Right ventricle myocardium superior (tissue), 1 donor: ENCODE measurements at regions of chr3 and their contacts with region 1.

Region 1: DNA sequence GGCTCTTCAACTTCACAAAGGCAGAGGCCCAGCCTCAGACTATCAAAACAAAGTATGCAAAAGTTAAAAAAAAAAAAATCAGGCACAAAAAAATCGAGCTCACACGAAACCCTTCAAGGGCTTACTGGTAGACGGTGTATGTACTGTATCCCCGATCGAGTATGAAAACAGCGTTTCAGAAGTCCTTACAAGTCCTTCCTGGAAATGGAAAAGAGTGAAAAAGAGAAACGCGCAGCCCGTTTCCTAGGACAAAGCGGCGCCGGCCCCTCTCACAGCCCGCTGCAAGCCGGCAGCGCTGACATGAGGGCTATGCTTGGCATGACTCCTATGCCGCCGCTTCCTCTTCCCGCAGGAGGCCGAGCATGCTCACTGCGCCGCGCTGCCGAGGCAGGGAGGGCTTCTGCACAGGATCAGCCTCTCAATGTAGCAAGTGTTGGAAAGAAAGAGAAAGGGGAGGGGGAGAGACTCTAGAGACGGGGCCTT is at the start of gene VGLL4:
- DNase-seq: peak; percentile 96
- ATAC-seq: peak; percentile 90
- total RNA-seq, gene VGLL4: 23.0 TPM

Region 2: GRCh38 chr3:11561341-11561943 is 82.2 kb before region 1 on chr3:
- intact Hi-C with region 1: loop called (anchors 5 kb)
- DNase-seq: peak; percentile 25
- ATAC-seq: no peak

Region 3: DNA sequence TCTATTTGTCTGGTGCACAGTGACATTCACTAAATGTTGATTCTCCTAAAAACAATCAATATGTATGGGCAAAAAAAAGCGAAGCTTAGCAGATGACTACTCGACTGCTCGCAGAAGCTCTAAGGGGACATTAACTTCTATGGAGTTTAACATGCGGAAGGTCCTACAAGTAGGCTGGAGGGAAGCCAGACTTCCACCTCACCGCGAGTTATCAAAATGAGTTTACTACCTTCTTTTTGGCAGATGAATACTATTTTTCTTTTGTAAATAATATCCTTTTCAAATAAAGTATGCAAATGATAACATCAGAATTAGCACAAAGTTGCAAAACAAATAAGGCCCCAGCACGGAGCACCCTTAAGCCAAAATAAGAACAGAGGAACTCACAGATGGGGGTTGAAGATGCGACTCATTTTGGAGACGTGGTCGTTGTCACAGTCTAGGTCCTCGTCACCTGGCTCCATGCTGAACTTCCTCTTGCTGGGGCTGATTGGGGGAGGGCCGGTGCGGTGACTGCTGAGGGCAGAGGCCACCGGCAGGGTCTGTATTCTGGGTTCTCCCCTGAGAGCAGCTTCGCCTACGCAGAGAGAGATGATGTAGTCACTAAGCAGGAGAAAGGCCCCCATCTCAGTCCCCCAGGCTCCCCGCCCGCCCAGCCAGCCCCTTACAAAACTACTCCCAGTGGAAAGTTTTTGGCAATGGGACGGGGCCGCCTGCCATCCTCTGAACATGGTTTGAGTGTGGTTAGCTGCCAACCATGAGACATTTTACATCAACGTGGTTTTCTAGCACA is 42.0 kb before region 1 on chr3:
- intact Hi-C with region 1: loop called (anchors 5 kb)
- DNase-seq: peak; percentile 76
- ATAC-seq: peak; percentile 48

Region 4: DNA sequence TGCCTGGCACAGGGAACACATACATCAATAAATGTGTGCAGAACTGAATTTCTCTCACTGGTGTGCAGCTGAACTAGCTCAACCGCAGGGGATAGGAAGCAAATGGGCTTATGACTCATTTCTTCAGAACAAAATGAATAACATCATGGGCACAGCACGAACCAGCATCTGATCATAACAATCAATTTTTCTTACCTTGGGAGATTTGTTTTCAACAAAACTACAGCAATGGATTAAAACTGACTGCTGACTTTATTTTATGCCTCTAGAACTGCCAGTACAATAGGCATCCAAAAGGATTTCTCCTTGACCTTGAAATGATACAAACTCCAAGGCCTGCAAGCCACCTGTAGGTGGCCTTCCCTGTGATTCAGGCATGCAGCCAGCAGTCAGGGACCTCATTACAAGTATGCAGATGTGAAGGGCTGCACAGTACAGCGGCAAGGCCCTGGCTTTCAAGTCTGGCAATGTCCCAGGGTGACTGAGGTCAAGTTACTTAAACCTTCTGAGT is 176.9 kb after region 1 on chr3:
- intact Hi-C with region 1: no loop called
- DNase-seq: no peak
- ATAC-seq: no peak

Region 5: GRCh38 chr3:12556671-12557472 is 913.2 kb after region 1 on chr3 and contains the start of gene MKRN2:
- intact Hi-C with region 1: no loop called
- DNase-seq: peak; percentile 93
- ATAC-seq: peak; percentile 97
- total RNA-seq, gene MKRN2: 27.7 TPM